Mammary epithelial cell (primary cell): ENCODE measurements at regions of chr1 and their contacts with region 1.

Region 1: DNA sequence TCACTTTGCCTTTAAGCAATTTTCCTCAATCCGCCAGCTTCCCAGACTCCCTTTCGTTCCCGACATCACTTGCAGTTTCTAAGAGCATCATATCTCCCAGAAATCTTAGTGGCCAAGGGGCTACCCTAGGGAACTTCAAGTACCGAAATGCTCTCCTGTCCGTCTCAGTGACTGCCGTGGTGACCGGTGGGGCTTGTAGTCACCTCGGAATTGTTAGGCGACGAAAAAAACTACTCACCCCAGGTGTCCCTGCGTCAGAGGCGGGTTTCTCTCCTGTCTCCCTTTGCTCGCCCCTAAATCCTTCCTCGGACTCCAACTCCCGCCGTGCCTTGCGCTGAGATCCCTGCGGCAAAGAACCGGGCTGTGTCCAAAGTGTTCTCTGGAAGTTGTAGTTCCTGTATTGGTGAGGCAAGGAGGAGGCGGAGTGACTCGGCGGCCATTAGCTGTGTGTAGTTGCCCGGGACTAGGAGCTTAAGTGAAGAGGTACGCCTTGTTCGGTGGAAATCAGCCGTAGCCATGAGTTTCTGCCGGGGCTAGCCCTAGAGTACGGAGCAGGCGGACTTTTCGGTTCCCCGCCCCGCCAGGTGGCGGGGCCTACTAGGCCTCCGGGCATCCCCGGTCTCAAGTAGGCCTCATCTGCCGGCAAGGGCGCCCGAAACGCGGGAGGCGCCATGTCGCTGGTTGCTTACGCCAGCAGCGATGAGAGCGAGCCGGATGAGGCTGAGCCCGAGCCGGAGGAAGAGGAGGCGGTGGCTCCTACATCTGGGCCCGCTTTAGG is at the start of gene PRCC:
- DNase-seq: peak; percentile 100
- H3K4me3 ChIP-seq: peak within 1 kb of the TSS; percentile 65 to 99 (median 91)
- H3K27ac ChIP-seq: peak within 1 kb of the TSS; percentile 86
- H3K4me1 ChIP-seq: peaks cover 20% of the 10 kb centered on the region
- H3K27me3 ChIP-seq: no peaks in the 10 kb centered on the region
- CTCF ChIP-seq: no peak
- total RNA-seq, gene PRCC: 22.2 to 69.7 TPM

Region 2: GRCh38 chr1:156751758-156752757 is 15.2 kb before region 1 on chr1:
- CTCF ChIA-PET with region 1: no interaction called
- dilution Hi-C with region 1: no loop called
- in situ Hi-C with region 1: no loop called
- intact Hi-C with region 1: loop called (anchors 1 kb)
- DNase-seq: peak; percentile 94
- H3K4me3 ChIP-seq: peak overlapping the region; percentile 68 to 76 (median 72)
- H3K27ac ChIP-seq: peak overlapping the region; percentile 74
- H3K4me1 ChIP-seq: peaks cover 33% of the 10 kb centered on the region
- H3K27me3 ChIP-seq: no peaks in the 10 kb centered on the region
- CTCF ChIP-seq: peak in 1 of 2 donors; percentile 1

Region 3: DNA sequence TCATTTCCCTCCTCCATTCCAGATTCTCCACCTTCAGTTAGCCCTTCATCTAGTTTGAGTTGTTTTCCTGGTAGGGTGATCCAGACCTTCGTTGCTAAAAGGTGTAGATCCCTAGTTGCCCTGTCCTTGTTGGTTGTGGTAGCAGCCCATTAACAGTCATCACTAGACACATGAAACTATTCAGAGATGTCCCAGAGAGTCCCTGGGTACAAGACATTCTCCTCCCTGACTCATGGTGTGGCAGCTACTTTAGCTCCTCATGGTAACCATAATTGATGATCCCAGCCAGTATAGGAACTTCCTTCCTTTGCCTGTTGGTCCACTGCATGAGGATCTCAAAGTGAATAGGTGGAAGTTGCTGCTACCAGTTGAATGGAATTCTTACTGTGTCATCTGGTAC is 55.4 kb after region 1 on chr1:
- CTCF ChIA-PET with region 1: interaction called, 10 read pairs
- dilution Hi-C with region 1: no loop called
- in situ Hi-C with region 1: no loop called
- intact Hi-C with region 1: no loop called
- DNase-seq: no peak
- H3K4me3 ChIP-seq: no peak overlapping the region
- H3K27ac ChIP-seq: no peak overlapping the region
- H3K4me1 ChIP-seq: no peaks in the 10 kb centered on the region
- H3K27me3 ChIP-seq: no peaks in the 10 kb centered on the region
- CTCF ChIP-seq: no peak